Activated B cell treated with CpG ODN at 0.5 μM for 24 hours (primary cell): ENCODE measurements at regions of chr6 and their contacts with region 1.

Region 1: DNA sequence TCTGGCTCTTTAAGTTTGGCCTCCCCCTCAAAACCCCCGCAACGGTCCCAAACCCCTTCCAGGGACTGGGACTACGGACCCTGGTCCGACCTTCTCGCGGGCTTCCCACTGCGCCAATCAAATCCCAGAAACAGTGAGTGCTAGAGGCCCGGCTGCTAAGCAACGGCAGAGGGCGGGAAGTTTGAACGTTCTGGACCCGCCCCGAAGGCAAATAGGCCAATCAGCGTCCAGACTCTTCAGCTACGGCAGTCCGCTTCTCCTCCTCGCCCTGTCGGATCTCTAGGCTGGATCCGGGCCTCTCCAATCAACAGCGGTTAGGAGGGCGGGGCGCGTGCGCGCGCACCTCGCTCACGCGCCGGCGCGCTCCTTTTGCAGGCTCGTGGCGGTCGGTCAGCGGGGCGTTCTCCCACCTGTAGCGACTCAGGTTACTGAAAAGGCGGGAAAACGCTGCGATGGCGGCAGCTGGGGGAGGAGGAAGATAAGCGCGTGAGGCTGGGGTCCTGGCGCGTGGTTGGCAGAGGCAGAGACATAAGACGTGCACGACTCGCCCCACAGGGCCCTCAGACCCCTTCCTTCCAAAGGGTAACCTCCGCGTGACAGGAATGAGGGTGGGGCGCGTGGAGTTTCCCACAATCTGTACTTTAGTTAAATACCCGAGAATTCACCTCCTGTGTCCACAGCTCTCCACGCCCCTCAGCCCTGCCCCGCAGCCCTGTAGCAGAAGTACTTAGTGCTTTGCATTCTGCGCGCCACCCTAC is at the start of gene MSH5:
- DNase-seq: peak; percentile 90
- ATAC-seq: peak; percentile 80
- H3K4me3 Mint-ChIP-seq: peak within 1 kb of the TSS; percentile 93
- H3K27ac Mint-ChIP-seq: peak within 1 kb of the TSS; percentile 94
- H3K4me1 Mint-ChIP-seq: peaks cover 51% of the 10 kb centered on the region
- H3K27me3 Mint-ChIP-seq: no peaks in the 10 kb centered on the region
- CTCF ChIP-seq: no peak
- total RNA-seq, gene MSH5: 35.4 and 47.3 TPM in 2 replicates

Region 2: GRCh38 chr6:31493875-31494694 is 245.7 kb before region 1 on chr6:
- CTCF ChIA-PET with region 1: no interaction called
- POLR2A ChIA-PET with region 1: no interaction called
- intact Hi-C with region 1: loop called (anchors 10 kb)
- DNase-seq: peak; percentile 76
- ATAC-seq: peak; percentile 48
- H3K4me3 Mint-ChIP-seq: peak overlapping the region; percentile 90
- H3K27ac Mint-ChIP-seq: peak overlapping the region; percentile 92
- H3K4me1 Mint-ChIP-seq: peaks cover 54% of the 10 kb centered on the region
- H3K27me3 Mint-ChIP-seq: no peaks in the 10 kb centered on the region
- CTCF ChIP-seq: no peak

Region 3: DNA sequence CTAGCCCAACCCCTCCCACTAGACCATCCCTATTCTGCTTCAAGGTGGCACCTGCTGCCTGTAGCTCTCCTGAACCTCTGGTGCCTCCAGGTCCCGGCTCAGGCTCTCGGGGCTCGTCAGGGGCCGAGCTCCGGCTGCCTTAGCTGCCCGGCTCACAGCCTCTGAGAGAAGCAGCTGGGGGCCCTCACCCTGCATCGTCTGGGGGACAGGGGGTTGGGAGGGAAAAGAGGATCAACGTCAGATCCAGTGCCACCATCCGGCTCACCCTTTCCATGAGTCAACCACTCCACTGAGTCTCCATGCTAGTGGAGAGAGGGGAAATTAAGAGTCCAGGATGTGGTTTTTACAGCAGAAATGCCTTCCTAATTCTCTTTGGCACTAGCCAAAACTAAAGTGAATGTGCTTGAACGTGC is 100.4 kb before region 1 on chr6:
- CTCF ChIA-PET with region 1: no interaction called
- POLR2A ChIA-PET with region 1: no interaction called
- intact Hi-C with region 1: no loop called
- DNase-seq: no peak
- ATAC-seq: no peak
- H3K4me3 Mint-ChIP-seq: no peak overlapping the region
- H3K27ac Mint-ChIP-seq: no peak overlapping the region
- H3K4me1 Mint-ChIP-seq: no peaks in the 10 kb centered on the region
- H3K27me3 Mint-ChIP-seq: no peaks in the 10 kb centered on the region
- CTCF ChIP-seq: no peak

Region 4: DNA sequence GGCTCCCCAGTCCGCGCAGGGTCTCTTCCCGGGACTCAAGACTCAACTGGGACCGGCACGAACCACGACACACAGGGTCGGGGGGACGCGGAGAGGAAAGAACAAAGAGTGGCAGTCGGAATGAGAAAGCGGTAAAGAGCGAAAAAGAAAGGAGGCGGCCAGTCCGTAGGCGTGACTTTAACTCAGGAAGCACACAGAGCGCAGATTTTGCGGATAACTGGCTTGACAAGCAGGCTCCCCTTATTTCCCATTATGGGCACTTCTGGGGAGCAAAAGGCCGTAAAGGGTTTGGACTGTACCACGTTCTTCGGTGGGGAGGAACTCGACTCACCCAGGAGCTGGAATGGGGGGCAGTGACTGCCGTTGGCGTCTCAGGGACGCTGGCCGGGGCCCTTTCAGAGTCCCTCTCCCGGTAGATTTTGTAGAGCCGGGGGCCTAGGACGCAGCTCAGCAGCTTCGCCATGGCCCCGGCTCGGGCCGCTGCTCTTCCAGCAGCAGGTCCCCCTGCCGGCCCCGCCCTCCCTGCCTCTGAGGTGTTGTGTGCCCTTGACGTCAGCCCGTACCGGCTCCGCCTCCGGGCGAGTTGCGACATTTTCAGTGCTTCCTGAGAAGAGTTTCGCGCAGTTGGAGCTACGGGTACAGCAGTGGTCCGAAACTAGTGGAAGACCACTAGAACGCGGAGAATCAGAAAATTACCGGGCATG is 36.8 kb before region 1 on chr6 and contains the start of gene ABHD16A:
- CTCF ChIA-PET with region 1: no interaction called
- POLR2A ChIA-PET with region 1: interaction called, 32 read pairs
- intact Hi-C with region 1: loop called (anchors 1 kb)
- DNase-seq: peak; percentile 94
- ATAC-seq: peak; percentile 93
- H3K4me3 Mint-ChIP-seq: peak within 1 kb of the TSS; percentile 99
- H3K27ac Mint-ChIP-seq: peak within 1 kb of the TSS; percentile 89
- H3K4me1 Mint-ChIP-seq: peaks cover 28% of the 10 kb centered on the region
- H3K27me3 Mint-ChIP-seq: no peaks in the 10 kb centered on the region
- CTCF ChIP-seq: no peak
- total RNA-seq, gene ABHD16A: 49.3 and 59.1 TPM in 2 replicates

Region 5: DNA sequence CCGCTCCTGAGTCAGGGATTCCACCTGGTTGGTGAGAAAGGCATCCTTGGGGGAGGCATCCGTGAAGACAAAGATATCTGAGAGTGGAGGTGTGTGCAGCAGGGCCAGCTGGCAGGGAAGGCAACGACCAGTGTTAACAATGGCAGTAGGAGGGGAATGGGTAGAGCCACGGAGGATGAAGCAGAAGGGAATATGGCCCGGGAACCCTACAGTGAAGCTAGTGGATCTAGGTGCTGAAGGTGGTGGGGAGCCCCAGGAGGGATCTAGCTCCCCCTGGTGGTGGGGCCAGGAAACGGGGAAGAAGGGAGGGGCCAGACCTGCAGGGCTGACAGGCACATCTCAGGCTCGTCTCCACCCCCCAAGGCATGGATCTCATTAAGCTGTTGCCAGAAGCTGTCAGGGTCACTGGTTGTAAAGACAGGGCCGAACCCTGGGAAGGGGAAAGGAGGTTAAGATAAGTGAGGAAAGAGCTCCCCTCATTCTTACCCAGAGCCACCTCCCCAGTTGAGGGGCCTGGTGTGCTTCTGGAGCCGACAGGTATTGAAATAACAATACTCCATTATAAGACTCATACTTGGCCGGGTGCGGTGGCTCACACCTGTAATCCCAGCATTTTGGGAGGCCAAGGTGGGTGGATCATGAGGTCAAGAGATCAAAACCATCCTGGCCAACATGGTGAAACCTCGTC is 30.0 kb after region 1 on chr6:
- CTCF ChIA-PET with region 1: interaction called, 14 read pairs
- POLR2A ChIA-PET with region 1: interaction called, 10 read pairs
- intact Hi-C with region 1: no loop called
- DNase-seq: peak; percentile 76
- ATAC-seq: peak; percentile 98
- H3K4me3 Mint-ChIP-seq: no peak overlapping the region
- H3K27ac Mint-ChIP-seq: no peak overlapping the region
- H3K4me1 Mint-ChIP-seq: peaks cover 16% of the 10 kb centered on the region
- H3K27me3 Mint-ChIP-seq: no peaks in the 10 kb centered on the region
- CTCF ChIP-seq: no peak

Region 6: GRCh38 chr6:31795616-31796298 is 55.9 kb after region 1 on chr6 and contains the start of gene VARS1:
- CTCF ChIA-PET with region 1: interaction called, 8 read pairs
- POLR2A ChIA-PET with region 1: interaction called, 103 read pairs
- intact Hi-C with region 1: loop called (anchors 2 kb)
- DNase-seq: peak; percentile 89
- ATAC-seq: peak; percentile 89
- H3K4me3 Mint-ChIP-seq: peak within 1 kb of the TSS; percentile 98
- H3K27ac Mint-ChIP-seq: peak within 1 kb of the TSS; percentile 98
- H3K4me1 Mint-ChIP-seq: peaks cover 65% of the 10 kb centered on the region
- H3K27me3 Mint-ChIP-seq: no peaks in the 10 kb centered on the region
- CTCF ChIP-seq: no peak
- total RNA-seq, gene VARS1: 136 and 140 TPM in 2 replicates

Region 7: GRCh38 chr6:31815025-31815838 is 75.4 kb after region 1 on chr6 and contains the starts of genes HSPA1A and HSPA1L:
- CTCF ChIA-PET with region 1: interaction called, 5 read pairs
- POLR2A ChIA-PET with region 1: interaction called, 11 read pairs
- intact Hi-C with region 1: no loop called
- DNase-seq: peak; percentile 59
- ATAC-seq: peak; percentile 49
- H3K4me3 Mint-ChIP-seq: peak within 1 kb of the TSS; percentile 91
- H3K27ac Mint-ChIP-seq: peak within 1 kb of the TSS; percentile 90
- H3K4me1 Mint-ChIP-seq: peaks cover 30% of the 10 kb centered on the region
- H3K27me3 Mint-ChIP-seq: no peaks in the 10 kb centered on the region
- CTCF ChIP-seq: no peak
- total RNA-seq, gene HSPA1A: 27.1 and 28.1 TPM in 2 replicates
- total RNA-seq, gene HSPA1L: 1.2 and 2.1 TPM in 2 replicates

Region 8: DNA sequence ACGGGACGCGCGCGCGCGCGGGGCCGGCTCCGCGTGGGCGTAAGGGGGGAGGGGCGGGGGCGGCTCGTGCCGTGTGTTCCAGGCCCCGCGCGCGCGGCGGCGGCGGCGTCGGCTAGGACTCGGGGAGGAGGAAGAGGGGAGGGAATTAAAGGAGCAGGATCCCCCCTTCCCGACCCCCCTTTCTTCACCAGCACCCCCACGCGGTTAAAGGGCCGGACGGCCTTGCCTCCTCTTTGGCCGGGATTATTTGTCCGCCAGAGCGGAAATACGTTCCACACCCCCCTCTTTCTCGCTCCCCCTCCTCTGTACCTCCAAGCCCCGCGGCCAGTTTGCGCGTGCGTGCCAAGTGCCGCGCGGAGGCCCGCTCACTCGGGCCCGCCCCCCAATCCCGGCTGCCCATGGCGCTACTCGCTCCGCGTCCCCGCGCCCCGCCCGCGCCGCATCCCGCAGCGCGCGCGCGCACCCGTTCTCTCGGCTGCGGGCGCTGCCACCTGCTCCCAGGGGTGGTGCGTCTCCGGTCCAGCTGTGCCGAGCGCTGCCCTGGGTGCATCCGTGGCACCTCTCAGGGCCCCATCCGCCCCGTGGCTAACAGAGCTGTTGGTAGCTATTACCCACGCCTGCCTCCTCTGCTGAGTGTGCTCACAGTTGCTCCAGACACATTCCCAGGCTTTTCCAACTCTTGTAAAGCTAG is 162.3 kb after region 1 on chr6 and contains the start of gene ZBTB12:
- CTCF ChIA-PET with region 1: no interaction called
- POLR2A ChIA-PET with region 1: interaction called, 10 read pairs
- intact Hi-C with region 1: no loop called
- DNase-seq: peak; percentile 83
- ATAC-seq: peak; percentile 69
- H3K4me3 Mint-ChIP-seq: peak within 1 kb of the TSS; percentile 89
- H3K27ac Mint-ChIP-seq: peak within 1 kb of the TSS; percentile 86
- H3K4me1 Mint-ChIP-seq: peaks cover 27% of the 10 kb centered on the region
- H3K27me3 Mint-ChIP-seq: no peaks in the 10 kb centered on the region
- CTCF ChIP-seq: no peak
- total RNA-seq, gene ZBTB12: 4.8 and 5.5 TPM in 2 replicates

Region 9: DNA sequence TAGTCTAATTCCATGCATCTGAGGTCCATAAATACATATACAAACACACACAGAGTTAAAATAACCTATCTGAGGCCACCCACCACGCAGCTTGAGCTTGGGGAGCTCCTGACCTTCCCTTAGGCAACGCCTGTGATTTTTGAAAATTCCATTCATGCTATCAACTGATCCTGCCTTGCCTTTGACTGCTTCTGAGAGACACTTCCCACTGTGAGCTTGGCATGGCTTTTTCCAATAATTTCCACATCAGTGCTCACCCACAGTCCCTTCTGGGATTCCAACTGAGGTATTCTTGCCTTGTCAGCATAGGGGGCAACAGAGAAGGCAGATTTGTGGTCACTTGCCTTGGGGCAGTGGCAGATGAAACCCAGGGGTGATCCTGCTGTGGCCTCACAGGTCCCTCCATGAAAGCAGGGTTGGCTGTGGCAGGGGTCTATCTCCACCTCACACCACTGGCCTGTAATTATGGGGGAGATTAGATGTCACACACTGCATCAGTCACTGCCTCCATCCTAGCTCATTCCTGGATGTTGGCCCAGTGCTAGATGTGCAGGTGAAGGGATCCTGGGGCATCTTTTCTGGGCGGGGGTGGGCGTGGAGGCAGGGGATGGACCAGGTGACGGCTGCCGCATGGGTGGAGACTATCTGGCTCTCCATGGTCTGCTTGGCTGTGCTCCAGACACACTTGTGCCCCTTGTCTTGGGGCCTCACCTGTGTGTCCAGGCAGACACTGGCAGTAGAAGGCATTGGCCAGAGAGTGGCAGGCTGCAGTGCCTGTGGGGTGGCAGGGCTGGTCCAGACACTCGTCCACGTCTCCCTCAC is 463.8 kb after region 1 on chr6:
- CTCF ChIA-PET with region 1: no interaction called
- POLR2A ChIA-PET with region 1: no interaction called
- intact Hi-C with region 1: no loop called
- DNase-seq: no peak
- ATAC-seq: no peak
- H3K4me3 Mint-ChIP-seq: no peak overlapping the region
- H3K27ac Mint-ChIP-seq: no peak overlapping the region
- H3K4me1 Mint-ChIP-seq: peaks cover 5% of the 10 kb centered on the region
- H3K27me3 Mint-ChIP-seq: peaks cover 5% of the 10 kb centered on the region
- CTCF ChIP-seq: no peak